OCI-LY7 (cell line): ENCODE measurements at regions of chr20 and their contacts with region 1.

Region 1: GRCh38 chr20:49888345-49888966 is 26.9 kb downstream of the SPATA2 start:
- DNase-seq: peak; percentile 77
- H3K4me3 ChIP-seq: no peak overlapping the region
- H3K27ac ChIP-seq: no peak overlapping the region
- H3K4me1 ChIP-seq: peaks cover 5% of the 10 kb centered on the region
- CTCF ChIP-seq: peak; percentile 96

Region 2: GRCh38 chr20:49541733-49542513 is 346.5 kb before region 1 on chr20:
- CTCF ChIA-PET with region 1: no interaction called
- POLR2A ChIA-PET with region 1: no interaction called
- intact Hi-C with region 1: loop called (anchors 1 kb)
- DNase-seq: peak; percentile 89
- H3K4me3 ChIP-seq: no peak overlapping the region
- H3K27ac ChIP-seq: no peak overlapping the region
- H3K4me1 ChIP-seq: no peaks in the 10 kb centered on the region
- CTCF ChIP-seq: peak; percentile 98

Region 3: GRCh38 chr20:49909499-49910339 is 21.3 kb after region 1 on chr20:
- CTCF ChIA-PET with region 1: no interaction called
- POLR2A ChIA-PET with region 1: no interaction called
- intact Hi-C with region 1: no loop called
- DNase-seq: no peak
- H3K4me3 ChIP-seq: no peak overlapping the region
- H3K27ac ChIP-seq: no peak overlapping the region
- H3K4me1 ChIP-seq: peaks cover 12% of the 10 kb centered on the region
- CTCF ChIP-seq: peak; percentile 55; the same call in 1 of the 2 replicates

Region 4: GRCh38 chr20:49928401-49929141 is 40.1 kb after region 1 on chr20:
- CTCF ChIA-PET with region 1: interaction called, 7 read pairs
- POLR2A ChIA-PET with region 1: no interaction called
- intact Hi-C with region 1: loop called (anchors 5 kb)
- DNase-seq: peak; percentile 88
- H3K4me3 ChIP-seq: no peak overlapping the region
- H3K27ac ChIP-seq: no peak overlapping the region
- H3K4me1 ChIP-seq: peaks cover 13% of the 10 kb centered on the region
- CTCF ChIP-seq: peak; percentile 97